Activated CD4-positive, alpha-beta memory T cell treated with anti-CD3 and anti-CD28 coated beads, Interleukin-2, amount 10 ng/mL, durations not matched to agents 7 days and 5 days (primary cell): ENCODE measurements at regions of chr12 and their contacts with region 1.

Region 1: GRCh38 chr12:120194534-120195395 is at the start of gene GCN1:
- DNase-seq: peak; percentile 89
- H3K4me3 Mint-ChIP-seq: peak within 1 kb of the TSS; percentile 87
- H3K27ac Mint-ChIP-seq: peak within 1 kb of the TSS; percentile 98
- H3K4me1 Mint-ChIP-seq: peaks cover 65% of the 10 kb centered on the region
- H3K27me3 Mint-ChIP-seq: no peaks in the 10 kb centered on the region
- total RNA-seq, gene GCN1: 86.0 to 94.3 TPM

Region 2: DNA sequence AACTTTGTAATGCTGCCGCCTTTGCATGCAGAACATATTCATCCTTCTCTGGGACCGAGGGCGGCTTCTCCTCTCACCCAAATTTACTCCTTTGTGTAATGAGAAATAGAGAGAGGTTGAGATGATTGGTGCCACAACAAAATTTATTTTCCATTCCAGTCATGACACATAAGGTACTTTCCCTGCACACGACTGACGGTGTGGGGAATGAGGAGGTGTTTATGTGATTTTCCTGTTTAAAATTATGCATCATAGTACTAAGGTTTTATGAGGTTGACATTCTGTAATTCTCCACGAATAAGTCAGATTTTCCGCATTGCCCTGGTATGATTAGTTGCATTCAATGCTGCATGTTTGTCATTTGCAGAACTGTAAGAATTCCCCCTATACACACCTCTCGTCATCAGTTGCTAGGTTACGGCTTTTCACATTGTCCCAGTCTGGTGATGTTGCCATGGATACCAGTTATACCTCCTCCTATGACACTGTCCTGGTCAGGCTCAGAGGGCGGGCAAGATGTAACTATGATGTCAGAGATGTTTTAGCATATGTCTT is 182.6 kb before region 1 on chr12:
- CTCF ChIA-PET with region 1: no interaction called
- POLR2A ChIA-PET with region 1: interaction called, 17 read pairs
- DNase-seq: peak; percentile 77
- H3K4me3 Mint-ChIP-seq: peak overlapping the region; percentile 60
- H3K27ac Mint-ChIP-seq: peak overlapping the region; percentile 88
- H3K4me1 Mint-ChIP-seq: peaks cover 77% of the 10 kb centered on the region
- H3K27me3 Mint-ChIP-seq: no peaks in the 10 kb centered on the region

Region 3: GRCh38 chr12:120132863-120133385 is 61.8 kb before region 1 on chr12:
- CTCF ChIA-PET with region 1: no interaction called
- POLR2A ChIA-PET with region 1: no interaction called
- DNase-seq: no peak
- H3K4me3 Mint-ChIP-seq: no peak overlapping the region
- H3K27ac Mint-ChIP-seq: no peak overlapping the region
- H3K4me1 Mint-ChIP-seq: no peaks in the 10 kb centered on the region
- H3K27me3 Mint-ChIP-seq: no peaks in the 10 kb centered on the region

Region 4: DNA sequence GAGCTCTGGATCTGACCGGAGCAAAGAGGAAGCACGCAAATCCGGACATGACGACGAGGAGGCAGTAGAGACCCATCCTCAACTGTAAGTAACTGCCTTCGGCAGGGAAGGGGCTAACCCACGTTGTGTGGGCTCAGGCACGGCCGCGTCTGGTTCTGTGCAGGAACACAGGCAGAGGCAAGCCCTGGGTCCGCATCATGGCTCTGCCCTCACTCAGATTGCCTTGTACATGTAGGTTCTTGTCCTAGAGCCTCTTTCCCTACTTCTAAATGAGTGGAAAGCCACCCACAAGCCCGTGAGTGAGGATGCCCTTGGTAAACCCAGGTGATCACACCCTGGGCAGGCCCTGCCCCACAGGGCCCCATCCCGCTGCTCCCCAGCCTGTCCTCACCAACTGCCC is 15.1 kb after region 1 on chr12:
- CTCF ChIA-PET with region 1: no interaction called
- POLR2A ChIA-PET with region 1: interaction called, 90 read pairs
- DNase-seq: no peak
- H3K4me3 Mint-ChIP-seq: no peak overlapping the region
- H3K27ac Mint-ChIP-seq: no peak overlapping the region
- H3K4me1 Mint-ChIP-seq: no peaks in the 10 kb centered on the region
- H3K27me3 Mint-ChIP-seq: no peaks in the 10 kb centered on the region

Region 5: GRCh38 chr12:120249875-120250795 is 55.4 kb after region 1 on chr12:
- CTCF ChIA-PET with region 1: interaction called, 14 read pairs
- POLR2A ChIA-PET with region 1: interaction called, 99 read pairs
- DNase-seq: peak; percentile 80
- H3K4me3 Mint-ChIP-seq: peak overlapping the region; percentile 57
- H3K27ac Mint-ChIP-seq: peak overlapping the region; percentile 96
- H3K4me1 Mint-ChIP-seq: peaks cover 84% of the 10 kb centered on the region
- H3K27me3 Mint-ChIP-seq: no peaks in the 10 kb centered on the region

Region 6: DNA sequence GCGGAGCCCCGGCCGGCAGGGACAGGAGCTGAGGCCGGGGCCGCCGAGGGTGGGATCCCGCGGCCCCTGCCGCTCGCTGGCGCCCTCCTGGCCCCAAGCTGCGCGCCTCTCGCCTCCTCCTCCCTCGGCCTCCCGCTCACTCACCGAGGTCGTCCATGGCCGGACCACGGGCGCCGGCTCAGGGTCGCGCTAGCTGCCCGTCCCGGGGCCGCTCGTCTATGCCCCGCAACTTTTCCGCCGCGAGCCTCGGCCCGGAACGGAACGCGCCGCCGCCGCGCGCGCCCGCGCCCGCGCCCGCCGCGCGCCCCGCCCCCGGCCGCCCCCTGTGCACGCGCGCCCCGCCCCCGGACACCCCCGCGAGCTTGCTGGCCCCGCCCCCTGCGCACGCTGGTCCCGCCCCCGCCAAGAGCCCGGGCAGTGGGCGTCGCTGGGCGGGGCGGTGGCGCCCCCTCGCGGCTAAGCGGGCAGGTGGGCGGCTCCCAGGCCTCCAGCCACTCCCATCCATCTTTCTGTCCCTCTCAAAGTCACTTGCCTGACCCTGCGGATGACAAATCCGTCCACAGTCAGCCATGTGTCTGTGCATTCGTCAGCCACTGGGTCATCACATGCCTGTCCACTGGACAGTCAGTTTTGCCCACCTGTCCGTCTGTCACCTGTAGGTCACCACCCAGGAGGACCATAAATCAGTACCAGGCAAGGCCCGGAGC is 70.9 kb after region 1 on chr12 and contains the start of gene PXN:
- CTCF ChIA-PET with region 1: interaction called, 103 read pairs
- POLR2A ChIA-PET with region 1: interaction called, 168 read pairs
- DNase-seq: peak; percentile 92
- H3K4me3 Mint-ChIP-seq: peak within 1 kb of the TSS; percentile 90
- H3K27ac Mint-ChIP-seq: peak within 1 kb of the TSS; percentile 81
- H3K4me1 Mint-ChIP-seq: peaks cover 42% of the 10 kb centered on the region
- H3K27me3 Mint-ChIP-seq: no peaks in the 10 kb centered on the region
- total RNA-seq, gene PXN: 271 to 274 TPM